Ascending aorta (tissue), 2 donors: ENCODE measurements at regions of chr1 and their contacts with region 1.

Region 1: GRCh38 chr1:200488375-200489165 is 78.7 kb upstream of the ZNF281 start:
- DNase-seq: no peak
- H3K4me3 ChIP-seq: no peak overlapping the region
- H3K27ac ChIP-seq: no peak overlapping the region
- H3K4me1 ChIP-seq: no peaks in the 10 kb centered on the region
- H3K27me3 ChIP-seq: no peaks in the 10 kb centered on the region
- CTCF ChIP-seq: peak; percentile 57 to 76 (median 62)

Region 2: DNA sequence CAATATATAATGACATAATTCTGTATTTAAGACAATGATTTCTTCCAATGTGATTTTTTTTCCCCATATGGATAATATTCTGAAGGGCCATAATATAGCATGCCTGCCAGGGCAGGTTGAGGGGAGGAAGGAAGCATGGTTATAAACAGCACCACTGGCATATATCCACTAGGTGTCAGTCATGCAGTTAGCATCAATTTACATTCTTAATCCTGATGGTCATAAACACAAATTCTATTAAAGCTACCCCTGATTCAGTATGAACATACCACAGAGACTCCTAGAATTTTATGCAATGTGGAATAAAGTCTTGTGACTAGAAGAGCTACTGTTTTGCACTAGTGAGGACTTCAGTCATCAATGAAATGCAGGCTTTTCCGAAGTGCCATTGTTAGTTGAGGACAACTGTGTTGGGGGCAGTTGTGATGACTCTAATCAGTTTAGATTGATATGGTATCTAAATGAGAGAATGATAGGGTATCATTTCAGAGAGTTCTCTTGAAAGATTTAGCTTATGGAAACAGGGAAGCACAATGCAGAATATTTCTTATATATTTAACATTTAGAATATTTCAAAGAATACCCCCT is 803.8 kb before region 1 on chr1:
- intact Hi-C with region 1: loop called (anchors 10 kb)
- DNase-seq: no peak
- H3K4me3 ChIP-seq: no peak overlapping the region
- H3K27ac ChIP-seq: no peak overlapping the region
- H3K4me1 ChIP-seq: no peaks in the 10 kb centered on the region
- H3K27me3 ChIP-seq: no peaks in the 10 kb centered on the region
- CTCF ChIP-seq: peak; percentile 15 to 43 (median 19)

Region 3: DNA sequence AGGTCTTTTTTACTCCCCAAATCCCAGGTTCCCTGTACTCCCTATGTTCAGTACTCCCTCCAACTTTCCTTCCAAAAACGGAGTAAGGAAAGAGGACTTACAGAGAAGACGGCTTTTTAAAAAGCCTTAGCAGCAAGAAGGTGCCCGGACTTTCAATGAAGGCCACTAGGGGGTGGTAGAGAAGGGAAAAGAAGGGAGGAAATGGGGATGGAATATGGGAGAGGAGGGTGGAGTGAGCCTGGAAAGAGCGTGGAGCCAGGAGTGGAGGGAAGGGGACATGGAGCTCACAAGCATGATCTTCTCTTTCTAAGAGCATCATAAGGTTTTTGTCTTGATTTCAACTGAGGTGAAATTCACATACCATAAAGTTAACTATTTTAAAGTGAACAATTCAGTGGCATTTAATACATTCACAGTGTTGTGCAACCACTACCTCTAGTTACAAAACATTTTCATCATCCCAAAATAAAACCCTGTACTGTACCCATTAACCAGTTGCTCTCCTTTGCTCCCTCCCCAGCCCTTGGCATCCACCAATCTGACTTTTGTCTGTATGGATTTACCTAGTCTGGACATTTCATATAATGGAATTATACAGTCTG is 208.7 kb before region 1 on chr1:
- intact Hi-C with region 1: loop called (anchors 1 kb)
- DNase-seq: no peak
- H3K4me3 ChIP-seq: no peak overlapping the region
- H3K27ac ChIP-seq: no peak overlapping the region
- H3K4me1 ChIP-seq: no peaks in the 10 kb centered on the region
- H3K27me3 ChIP-seq: no peaks in the 10 kb centered on the region
- CTCF ChIP-seq: peak; percentile 37 to 66 (median 48)

Region 4: GRCh38 chr1:200526709-200527612 is 38.4 kb after region 1 on chr1:
- intact Hi-C with region 1: no loop called
- DNase-seq: no peak
- H3K4me3 ChIP-seq: no peak overlapping the region
- H3K27ac ChIP-seq: no peak overlapping the region
- H3K4me1 ChIP-seq: peaks cover 0 to 3% of the 10 kb centered on the region in 2 donors
- H3K27me3 ChIP-seq: no peaks in the 10 kb centered on the region
- CTCF ChIP-seq: no peak

Region 5: GRCh38 chr1:200673952-200674823 is 185.6 kb after region 1 on chr1:
- intact Hi-C with region 1: no loop called
- DNase-seq: no peak
- H3K4me3 ChIP-seq: no peak overlapping the region
- H3K27ac ChIP-seq: no peak overlapping the region
- H3K4me1 ChIP-seq: peaks cover 0 to 7% of the 10 kb centered on the region in 2 donors
- H3K27me3 ChIP-seq: no peaks in the 10 kb centered on the region
- CTCF ChIP-seq: no peak